Panc1 (cell line): ENCODE measurements at regions of chr19 and their contacts with region 1.

Region 1: DNA sequence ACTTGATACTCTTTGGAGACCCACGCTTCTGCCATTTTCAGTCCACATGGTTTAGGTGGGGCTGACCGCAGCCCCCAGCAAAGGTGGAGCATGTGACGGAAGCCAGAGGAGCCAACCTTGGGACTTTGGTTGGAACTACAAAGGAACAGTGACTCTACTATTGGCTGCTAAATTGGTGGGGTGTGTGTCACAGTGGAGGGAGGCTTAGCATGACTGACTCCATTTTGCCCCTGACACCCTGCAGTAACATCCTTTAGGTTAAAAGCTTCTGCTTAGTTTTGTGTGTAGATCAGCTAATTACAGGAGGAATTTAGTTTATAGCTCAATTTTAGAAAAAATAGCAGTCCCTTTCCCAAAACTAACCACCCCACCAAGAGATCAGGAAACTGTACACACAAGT is 6.6 kb downstream of the SDHAF1 start:
- DNase-seq: no peak
- ATAC-seq: no peak
- H3K4me3 ChIP-seq: no peak overlapping the region
- H3K27ac ChIP-seq: no peak overlapping the region
- H3K4me1 ChIP-seq: peaks cover 2% of the 10 kb centered on the region
- H3K27me3 ChIP-seq: no peaks in the 10 kb centered on the region
- CTCF ChIP-seq: no peak

Region 2: DNA sequence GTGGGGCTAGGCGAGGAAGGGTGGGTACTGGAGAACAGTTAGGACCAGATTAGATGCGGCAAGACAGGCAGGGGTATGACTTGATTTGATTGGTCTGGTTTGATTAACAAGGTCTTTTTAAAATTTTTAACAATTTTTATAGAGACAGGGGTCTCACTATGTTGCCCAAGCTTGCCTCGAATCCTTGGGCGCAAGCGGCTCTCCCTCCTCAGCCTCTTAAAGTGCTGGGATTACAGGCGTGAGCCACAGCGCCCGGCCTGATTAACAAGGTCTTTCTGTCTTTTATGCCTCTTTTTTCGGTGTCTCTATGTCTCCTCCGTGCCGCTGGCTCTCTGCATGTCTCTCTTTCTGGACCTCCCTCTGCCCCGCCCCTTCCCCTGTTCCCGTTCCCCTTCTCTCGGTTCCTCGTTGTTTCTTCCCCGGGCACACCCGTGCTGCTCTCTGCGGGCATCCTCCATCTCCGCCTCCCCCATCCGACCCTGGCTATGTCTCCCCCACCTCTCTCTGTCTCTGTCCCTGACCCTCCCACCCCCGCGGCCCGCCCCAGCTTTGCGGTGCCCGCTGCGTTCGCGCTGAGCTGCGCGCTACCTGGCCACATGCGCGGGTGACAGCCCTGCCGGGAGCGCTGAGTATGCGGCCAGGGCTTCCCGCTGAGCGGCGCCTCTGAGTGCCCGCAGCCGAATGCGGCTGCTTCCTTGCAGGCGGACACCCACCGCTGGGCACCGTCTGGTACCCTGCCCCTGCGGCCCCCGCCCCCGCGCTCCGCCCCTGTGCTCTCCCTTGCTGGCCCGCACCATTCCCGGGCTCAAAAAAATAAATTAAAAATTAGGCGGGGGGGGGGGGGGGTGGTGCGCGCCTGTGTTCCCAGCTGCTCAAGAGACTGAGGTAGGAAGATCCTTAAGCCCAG is 14.7 kb before region 1 on chr19:
- CTCF ChIA-PET with region 1: no interaction called
- POLR2A ChIA-PET with region 1: no interaction called
- in situ Hi-C with region 1: no loop called
- intact Hi-C with region 1: loop called (anchors 1 kb)
- DNase-seq: no peak
- ATAC-seq: peak; percentile 89
- H3K4me3 ChIP-seq: peak overlapping the region; percentile 36 to 48
- H3K27ac ChIP-seq: no peak overlapping the region
- H3K4me1 ChIP-seq: no peaks in the 10 kb centered on the region
- H3K27me3 ChIP-seq: 0 out of 2 replicates have a peak, but pooled peaks cover 4% of the 10 kb centered on the region
- CTCF ChIP-seq: no peak

Region 3: GRCh38 chr19:36214386-36215275 is 213.0 kb after region 1 on chr19 and contains the starts of genes ZNF146 and ZNF565:
- CTCF ChIA-PET with region 1: no interaction called
- POLR2A ChIA-PET with region 1: no interaction called
- in situ Hi-C with region 1: no loop called
- intact Hi-C with region 1: no loop called
- DNase-seq: peak; percentile 98
- ATAC-seq: peak; percentile 98
- H3K4me3 ChIP-seq: peak within 1 kb of the TSS; percentile 83 to 99
- H3K27ac ChIP-seq: peak within 1 kb of the TSS; percentile 99
- H3K4me1 ChIP-seq: peaks cover 5% of the 10 kb centered on the region; the same call in 1 of the 2 replicates
- H3K27me3 ChIP-seq: no peaks in the 10 kb centered on the region
- CTCF ChIP-seq: no peak
- total RNA-seq, gene ZNF146: 121 TPM
- total RNA-seq, gene ZNF565: 4.9 TPM